Sigmoid colon (tissue), 7 donors: ENCODE measurements at regions of chr5 and their contacts with region 1.

Region 1: DNA sequence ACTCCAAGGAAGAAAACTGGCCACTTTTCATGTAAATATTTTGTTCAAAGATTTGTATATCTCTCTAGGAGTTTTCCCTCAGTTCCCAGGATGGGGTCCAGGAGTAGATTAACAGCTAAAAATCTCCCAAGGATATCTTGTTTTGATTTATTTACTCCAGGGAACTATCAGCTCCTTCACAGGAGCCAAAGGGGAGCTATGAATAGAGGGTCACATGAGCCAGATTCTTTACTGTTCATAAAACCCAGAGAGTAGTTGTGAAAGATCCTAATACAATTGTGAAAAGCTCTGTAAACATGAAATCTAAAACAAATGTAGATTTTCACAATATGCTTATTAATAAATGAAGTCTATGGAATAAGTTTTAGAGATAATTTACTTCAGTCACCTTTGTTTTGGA is 16.9 kb downstream of the DIMT1 start:
- DNase-seq: no peak
- H3K4me3 ChIP-seq: no peak overlapping the region
- H3K27ac ChIP-seq: no peak overlapping the region
- H3K4me1 ChIP-seq: peaks cover 0 to 4% (median 0%) of the 10 kb centered on the region in 4 donors
- H3K27me3 ChIP-seq: no peaks in the 10 kb centered on the region
- CTCF ChIP-seq: no peak
- EP300 ChIP-seq: no peak
- POLR2A ChIP-seq: no peak

Region 2: DNA sequence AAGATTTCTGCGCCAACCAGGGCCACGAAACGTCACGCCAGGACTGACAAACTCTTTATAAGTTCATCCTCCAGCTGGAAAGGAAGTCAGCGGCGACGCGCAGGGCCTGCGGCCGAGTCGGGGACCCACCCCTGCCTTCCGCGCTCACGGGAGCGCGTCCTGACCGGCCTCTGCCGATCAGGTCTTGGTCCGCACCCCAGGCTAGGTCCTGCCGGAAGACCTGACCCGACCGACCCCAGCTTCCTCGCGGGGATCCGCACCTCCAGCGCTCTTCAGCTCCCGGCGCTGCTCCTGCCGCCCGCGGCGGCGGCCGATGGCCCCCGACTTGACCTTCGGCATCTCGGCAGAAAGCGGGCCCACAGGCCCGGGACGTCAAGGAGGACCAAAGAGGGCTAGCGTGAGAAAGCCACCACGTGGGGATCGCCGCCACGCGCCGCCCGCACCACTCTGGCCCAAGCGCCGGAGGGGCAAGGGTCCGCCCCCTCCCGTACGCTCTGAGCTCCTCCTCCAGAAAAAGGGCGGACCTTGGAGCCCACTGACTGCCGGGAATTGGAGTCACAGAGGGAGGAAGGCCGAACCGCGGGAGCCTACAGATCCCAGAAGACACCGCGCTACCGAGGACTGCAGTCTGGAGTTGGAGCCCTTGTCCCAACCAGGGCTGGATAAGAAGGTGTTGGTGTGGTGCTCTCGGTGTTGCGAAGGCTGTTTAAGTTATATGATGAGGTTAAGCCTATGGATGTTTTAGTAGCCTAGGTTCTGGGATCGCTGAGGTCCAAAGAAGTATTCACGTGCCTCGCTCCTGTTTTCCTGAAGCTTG is 16.8 kb after region 1 on chr5 and contains the start of gene DIMT1:
- intact Hi-C with region 1: loop called (anchors 1 kb)
- DNase-seq: peak; percentile 98
- H3K4me3 ChIP-seq: peak within 1 kb of the TSS; percentile 78 to 97 (median 96)
- H3K27ac ChIP-seq: peak within 1 kb of the TSS; percentile 94 to 99 (median 96)
- H3K4me1 ChIP-seq: peaks cover 0 to 16% (median 15%) of the 10 kb centered on the region in 4 donors
- H3K27me3 ChIP-seq: no peaks in the 10 kb centered on the region
- CTCF ChIP-seq: no peak
- EP300 ChIP-seq: no peak
- POLR2A ChIP-seq: peak; percentile 47 to 55
- total RNA-seq, gene DIMT1: 13.0 to 42.2 (median 25.3) TPM